Cardiac septum (tissue), 1 donor: ENCODE measurements at regions of chr7 and their contacts with region 1.

Region 1: DNA sequence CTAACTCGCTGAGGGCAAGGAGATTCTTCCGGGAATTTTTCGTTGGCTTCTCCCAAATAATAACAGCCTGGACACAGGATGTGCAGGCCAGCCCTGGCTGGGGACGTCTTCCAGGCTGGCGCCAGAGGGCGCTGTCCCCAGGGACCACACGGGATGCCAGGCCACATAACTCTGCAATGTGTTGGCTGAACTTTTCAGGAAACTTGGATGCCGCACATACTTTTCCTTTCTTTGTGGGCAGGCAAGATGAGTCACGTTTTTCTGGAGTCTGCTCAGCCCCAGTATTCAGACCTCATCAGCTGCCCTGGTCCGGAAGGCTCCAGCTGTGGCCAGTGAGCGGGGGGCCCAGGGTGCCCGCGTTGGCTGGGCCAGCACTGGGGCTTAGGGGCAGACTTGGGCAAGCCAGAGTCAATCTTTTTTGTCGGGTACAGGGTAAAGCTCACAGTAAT is 122.7 kb downstream of the PRKAG2 start:
- DNase-seq: peak; percentile 86

Region 2: GRCh38 chr7:151570366-151570915 is 183.7 kb before region 1 on chr7:
- intact Hi-C with region 1: loop called (anchors 2 kb)
- DNase-seq: no peak

Region 3: GRCh38 chr7:151626422-151627115 is 127.6 kb before region 1 on chr7:
- intact Hi-C with region 1: loop called (anchors 2 kb)
- DNase-seq: no peak